ENCODE measurements at regions of chr11 and their contacts with region 1.

Region 1: GRCh38 chr11:117843666-117844484 is 19.3 kb upstream of the FXYD2 start:
- DNase-seq: peak; percentile 91
- ATAC-seq: peak; percentile 84

Region 2: DNA sequence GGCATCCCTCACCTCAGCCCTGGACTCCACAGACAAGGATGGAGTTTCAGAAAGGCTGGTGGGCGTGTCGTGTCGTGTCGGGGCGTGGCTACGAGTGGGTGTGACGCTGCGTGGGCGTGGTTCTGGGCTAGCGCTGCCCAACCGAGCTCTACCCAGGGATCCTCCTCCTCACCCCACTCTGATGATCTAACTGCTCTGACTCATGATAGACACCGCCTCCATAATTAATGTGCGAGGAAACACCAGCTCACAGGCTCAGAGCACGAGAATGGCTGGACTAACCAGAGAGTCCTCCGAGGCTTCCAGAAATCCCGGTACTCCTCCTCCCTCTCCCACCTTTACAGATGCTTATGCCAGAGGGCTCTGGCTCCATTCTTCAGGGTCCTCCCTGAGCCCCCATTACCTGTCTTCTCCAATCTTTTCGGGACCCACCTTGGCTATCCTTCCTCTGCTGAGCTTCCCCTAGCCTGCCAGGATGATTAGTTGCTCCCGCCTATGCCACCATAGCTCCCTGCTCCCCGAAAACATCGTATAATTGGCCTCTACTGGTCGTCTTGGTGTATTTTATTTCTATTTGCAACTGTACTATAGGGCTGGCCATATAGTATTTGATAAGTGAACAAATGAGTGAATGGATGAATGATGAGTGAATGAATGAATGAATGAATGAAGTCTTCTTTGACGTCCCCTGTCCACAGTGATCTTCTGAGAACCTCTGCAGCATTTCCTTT is 63.5 kb after region 1 on chr11:
- intact Hi-C with region 1: loop called (anchors 5 kb)
- DNase-seq: peak; percentile 89
- ATAC-seq: peak; percentile 95

Region 3: DNA sequence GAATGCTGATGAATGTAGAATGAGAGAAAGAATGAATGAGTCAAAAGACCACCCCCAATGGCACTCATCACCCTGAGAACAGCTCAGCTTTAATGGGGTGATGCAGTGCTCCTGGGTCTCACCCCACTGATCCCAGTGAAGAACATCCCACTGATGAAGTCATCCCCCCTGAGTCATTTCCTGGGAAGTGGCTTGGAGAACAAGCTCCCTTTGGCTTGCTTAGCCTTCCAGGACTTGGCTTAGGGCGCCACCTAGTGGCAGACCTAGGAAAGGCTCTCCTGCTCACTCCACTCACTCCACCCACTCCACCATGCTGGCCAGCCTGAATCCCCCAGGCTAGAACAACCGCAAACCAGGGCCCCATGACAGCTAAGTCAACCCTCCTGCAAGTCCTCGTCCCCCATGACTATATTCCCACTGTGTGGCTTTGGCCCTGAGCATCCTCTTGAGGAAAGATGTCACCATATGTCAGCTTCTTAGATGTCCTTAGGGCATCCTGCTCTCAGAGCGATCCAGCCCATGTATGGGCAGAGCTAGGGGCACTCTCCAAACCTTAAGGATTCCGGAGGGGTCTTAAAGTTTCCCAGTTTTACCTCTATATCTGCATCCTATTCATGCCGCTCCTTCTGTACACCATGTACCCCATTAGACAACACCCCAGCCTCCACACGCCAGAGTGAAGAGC is 103.1 kb after region 1 on chr11:
- intact Hi-C with region 1: loop called (anchors 1 kb)
- DNase-seq: peak; percentile 91
- ATAC-seq: peak; percentile 97

Region 4: GRCh38 chr11:118051611-118052461 is 208.0 kb after region 1 on chr11:
- intact Hi-C with region 1: loop called (anchors 10 kb)
- DNase-seq: no peak
- ATAC-seq: no peak